ENCODE measurements at regions of chr22 and their contacts with region 1.

Region 1: GRCh38 chr22:37561212-37562048 is 1.1 kb downstream of the CDC42EP1 start:
- DNase-seq: peak; percentile 70 to 99
- H3K4me3 ChIP-seq: peak overlapping the region; percentile 29 to 71 (median 40)
- H3K27ac ChIP-seq: no peak overlapping the region
- H3K4me1 ChIP-seq: peaks cover 7 to 46% (median 22%) of the 10 kb centered on the region in 4 experiments
- H3K27me3 ChIP-seq: peaks cover 6 to 22% (median 16%) of the 10 kb centered on the region in 4 experiments; a peak in 6 of 7 replicates
- CTCF ChIP-seq: peak; percentile 78 to 88 (median 84)
- EP300 ChIP-seq: 0 out of 3 replicates have a peak, but pooled peaks of 1 of the 2 experiments have one; percentile 53
- POLR2A ChIP-seq: peak in 1 of 2 experiments; percentile 41; a peak in 1 of 3 replicates
- RAD21 ChIP-seq: peak; percentile 40 to 62; a peak in 3 of 4 replicates

Region 2: GRCh38 chr22:37529652-37530345 is 31.6 kb before region 1 on chr22:
- CTCF ChIA-PET with region 1: interaction called, 55 read pairs
- POLR2A ChIA-PET with region 1: interaction called, 3 read pairs
- DNase-seq: no peak
- H3K4me3 ChIP-seq: no peak overlapping the region
- H3K27ac ChIP-seq: no peak overlapping the region
- H3K4me1 ChIP-seq: no peaks in the 10 kb centered on the region
- H3K27me3 ChIP-seq: no peaks in the 10 kb centered on the region
- CTCF ChIP-seq: no peak
- EP300 ChIP-seq: no peak
- POLR2A ChIP-seq: no peak
- RAD21 ChIP-seq: no peak

Region 3: DNA sequence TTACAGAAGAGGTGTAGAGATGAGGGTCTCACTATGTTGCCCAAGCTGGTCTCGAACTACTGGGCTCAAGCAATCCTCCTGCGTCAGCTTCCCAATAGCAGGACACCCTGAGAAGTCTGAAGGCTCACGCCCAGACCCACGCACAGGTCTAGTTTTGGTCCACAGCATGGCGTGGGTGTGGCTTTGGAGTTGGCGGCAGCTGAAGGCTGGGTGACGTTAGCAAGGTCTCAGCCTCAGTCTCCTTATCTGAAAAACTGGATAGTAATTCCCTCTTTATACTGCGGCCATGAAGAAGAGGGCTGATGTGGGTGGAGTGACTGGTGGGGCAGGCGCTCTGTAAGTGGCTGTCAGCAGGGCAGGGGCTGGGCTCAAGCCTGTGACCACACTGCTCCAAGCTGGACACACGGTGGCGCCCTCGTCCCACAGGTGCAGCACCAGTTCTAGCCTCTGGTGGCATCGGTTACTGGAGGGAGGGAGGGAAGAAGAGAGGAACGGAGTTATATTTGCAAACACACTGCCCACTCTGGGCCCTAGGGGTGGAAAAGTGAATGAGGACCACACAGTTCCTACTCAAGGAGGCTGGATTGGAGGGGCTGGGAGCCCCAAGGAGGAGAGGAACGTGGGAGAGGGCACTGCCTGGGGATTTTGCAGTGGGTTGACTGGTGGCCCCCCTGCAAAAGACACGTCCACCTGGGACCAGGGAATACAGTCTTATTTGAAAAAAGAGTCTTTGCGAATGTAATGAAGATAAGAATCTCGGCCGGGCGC is 22.7 kb before region 1 on chr22:
- CTCF ChIA-PET with region 1: interaction called, 1,347 read pairs
- POLR2A ChIA-PET with region 1: interaction called, 198 read pairs
- DNase-seq: peak; percentile 88 to 95
- H3K4me3 ChIP-seq: no peak overlapping the region
- H3K27ac ChIP-seq: no peak overlapping the region
- H3K4me1 ChIP-seq: peaks cover 0 to 4% (median 0%) of the 10 kb centered on the region in 4 experiments; a peak in 2 of 7 replicates
- H3K27me3 ChIP-seq: no peaks in the 10 kb centered on the region; a peak in 1 of 7 replicates
- CTCF ChIP-seq: peak; percentile 99 to 100 (median 99)
- EP300 ChIP-seq: no peak
- POLR2A ChIP-seq: no peak
- RAD21 ChIP-seq: peak; percentile 100

Region 4: DNA sequence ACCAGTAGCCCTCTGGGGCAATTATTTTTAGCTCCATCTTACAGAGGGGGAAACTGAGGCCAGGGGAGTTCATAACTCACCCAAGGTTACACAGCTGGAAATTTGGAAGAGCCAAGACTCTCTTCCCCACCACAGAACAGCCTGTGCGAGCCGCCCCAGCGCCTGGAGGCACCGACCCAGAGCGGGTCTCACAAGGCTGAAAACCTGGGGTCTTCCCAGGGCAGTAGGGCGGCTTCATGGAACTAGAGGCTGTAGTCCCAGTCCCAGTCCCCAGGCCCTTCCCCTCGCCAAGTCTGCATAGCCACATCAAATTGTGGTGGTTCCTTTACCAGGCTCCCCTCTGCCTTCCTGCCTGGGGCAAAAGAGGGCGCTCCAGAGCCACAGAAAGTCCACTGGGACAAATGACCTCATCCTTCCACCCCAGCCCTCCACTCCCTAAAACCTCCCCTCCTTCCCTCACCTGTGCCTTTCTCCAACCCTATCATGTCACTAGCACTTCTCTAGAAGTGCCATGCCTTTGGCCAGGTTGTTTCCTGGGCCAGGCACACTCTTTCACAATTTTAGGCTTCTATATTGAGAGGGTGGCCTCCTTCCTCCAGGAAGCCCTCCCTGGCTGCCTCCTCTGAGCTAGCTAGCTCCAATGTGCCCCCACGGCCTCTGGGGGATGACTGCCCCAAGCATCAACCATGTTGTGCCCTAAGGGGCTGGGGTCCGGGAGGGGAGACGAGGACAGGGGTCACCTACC is 16.3 kb before region 1 on chr22:
- CTCF ChIA-PET with region 1: interaction called, 1,347 read pairs
- POLR2A ChIA-PET with region 1: interaction called, 198 read pairs
- DNase-seq: peak; percentile 61 to 95
- H3K4me3 ChIP-seq: peak overlapping the region in 3 of 4 experiments; percentile 15 to 57 (median 24); a peak in 4 of 8 replicates
- H3K27ac ChIP-seq: peak overlapping the region; percentile 49; the same call in 1 of the 2 replicates
- H3K4me1 ChIP-seq: peaks cover 5 to 17% (median 11%) of the 10 kb centered on the region in 4 experiments
- H3K27me3 ChIP-seq: no peaks in the 10 kb centered on the region; a peak in 1 of 7 replicates
- CTCF ChIP-seq: peak; percentile 86 to 96 (median 89)
- EP300 ChIP-seq: no peak
- POLR2A ChIP-seq: no peak
- RAD21 ChIP-seq: peak; percentile 90 to 91